H1 (cell line): ENCODE measurements at regions of chr5 and their contacts with region 1.

Region 1: DNA sequence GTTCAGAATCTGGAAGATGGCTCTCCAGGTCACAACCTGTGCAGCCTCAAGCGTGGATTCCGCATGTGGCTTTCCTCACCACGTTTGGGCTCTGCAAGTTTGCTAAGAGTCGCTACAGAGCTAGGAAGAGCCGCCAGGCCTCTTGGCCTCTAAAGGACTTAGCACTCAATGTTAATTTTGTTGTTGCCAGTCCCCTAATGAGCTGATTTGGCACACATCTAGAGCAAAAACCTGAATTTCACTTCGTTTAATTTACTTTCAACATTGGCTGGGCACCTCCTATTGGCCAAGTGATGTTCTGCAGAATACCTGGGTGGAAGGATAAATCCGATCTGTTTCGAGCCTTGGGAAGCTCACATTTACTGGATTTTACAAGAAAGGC is 65.8 kb upstream of the UNC5A start:
- DNase-seq: no peak
- H3K4me3 ChIP-seq: peak overlapping the region in 3 of 4 experiments; percentile 3 to 61 (median 3); a peak in 2 of 8 replicates
- H3K27ac ChIP-seq: no peak overlapping the region
- H3K4me1 ChIP-seq: peaks cover 7 to 33% (median 28%) of the 10 kb centered on the region in 4 experiments
- H3K27me3 ChIP-seq: peaks cover 0 to 23% (median 8%) of the 10 kb centered on the region in 4 experiments; a peak in 6 of 7 replicates
- CTCF ChIP-seq: peak in 2 of 3 experiments; percentile 49 to 70; a peak in 3 of 4 replicates
- EP300 ChIP-seq: no peak
- POLR2A ChIP-seq: no peak
- RAD21 ChIP-seq: peak; percentile 46 to 57

Region 2: DNA sequence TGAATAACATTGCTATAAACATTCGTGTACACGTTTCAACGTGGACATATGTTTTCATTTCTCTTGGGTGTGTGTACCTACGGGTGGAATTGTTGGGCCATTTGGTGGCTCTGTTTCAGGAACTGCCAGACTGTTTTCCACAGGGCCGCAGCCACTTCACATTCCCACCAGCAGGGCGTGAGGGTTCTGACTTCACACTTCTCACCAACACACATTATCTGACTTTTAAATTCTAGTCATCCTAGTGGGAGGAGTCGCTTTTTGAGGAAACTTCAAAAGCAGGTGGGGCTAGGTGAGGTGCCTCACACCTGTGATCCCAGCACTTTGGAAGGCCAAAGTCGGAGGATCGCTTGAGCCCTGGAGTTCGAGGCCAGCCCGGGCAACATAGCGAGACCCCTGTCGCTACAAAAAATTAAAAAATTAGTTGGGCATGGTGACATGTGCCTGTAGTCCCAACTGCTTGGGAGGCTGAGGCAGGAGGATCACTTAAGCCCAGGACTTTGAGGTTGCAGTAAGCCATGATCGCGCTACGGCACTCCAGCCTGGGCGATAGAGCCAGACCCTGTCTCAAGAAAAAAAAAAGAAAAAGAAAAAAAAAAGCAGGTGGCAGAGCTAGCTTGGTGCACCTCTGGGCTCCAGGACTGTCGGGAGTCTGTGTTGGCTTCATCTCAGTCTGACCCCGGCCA is 68.8 kb before region 1 on chr5:
- CTCF ChIA-PET with region 1: interaction called, 14 read pairs
- POLR2A ChIA-PET with region 1: interaction called, 3 read pairs
- DNase-seq: peak in 1 of 2 experiments; percentile 74
- H3K4me3 ChIP-seq: no peak overlapping the region
- H3K27ac ChIP-seq: no peak overlapping the region
- H3K4me1 ChIP-seq: peaks cover 0 to 17% (median 11%) of the 10 kb centered on the region in 4 experiments; a peak in 6 of 7 replicates
- H3K27me3 ChIP-seq: peaks cover 0 to 18% (median 17%) of the 10 kb centered on the region in 4 experiments; a peak in 6 of 7 replicates
- CTCF ChIP-seq: peak in 2 of 3 experiments; percentile 65 to 86; a peak in 3 of 4 replicates
- EP300 ChIP-seq: no peak
- POLR2A ChIP-seq: no peak
- RAD21 ChIP-seq: peak; percentile 39 to 56

Region 3: DNA sequence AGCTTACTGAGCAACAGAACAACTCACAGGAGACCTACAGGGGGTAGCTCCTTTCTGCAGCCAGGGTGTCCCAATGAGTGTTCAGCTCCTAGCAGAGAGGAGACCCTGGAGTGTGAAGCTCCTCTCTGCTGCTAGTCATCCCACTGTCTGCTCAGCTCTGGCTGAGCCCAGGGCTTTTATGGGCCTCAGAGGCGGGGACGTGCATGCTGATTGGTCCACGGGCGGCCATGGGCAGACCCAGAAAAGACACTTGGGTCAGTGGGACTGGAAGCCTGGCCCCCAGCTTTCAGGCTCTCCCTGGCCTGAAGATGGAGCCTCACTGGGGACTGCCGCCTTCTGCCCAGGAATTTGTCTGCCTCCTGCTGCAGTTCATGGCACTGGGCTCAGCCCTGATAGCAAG is 56.7 kb before region 1 on chr5:
- CTCF ChIA-PET with region 1: interaction called, 22 read pairs
- POLR2A ChIA-PET with region 1: interaction called, 3 read pairs
- DNase-seq: peak in 1 of 2 experiments; percentile 21
- H3K4me3 ChIP-seq: no peak overlapping the region
- H3K27ac ChIP-seq: no peak overlapping the region
- H3K4me1 ChIP-seq: peaks cover 7 to 17% (median 11%) of the 10 kb centered on the region in 4 experiments; a peak in 6 of 7 replicates
- H3K27me3 ChIP-seq: no peaks in the 10 kb centered on the region
- CTCF ChIP-seq: no peak
- EP300 ChIP-seq: no peak
- POLR2A ChIP-seq: peak in 1 of 2 experiments; percentile 70; a peak in 2 of 3 replicates
- RAD21 ChIP-seq: no peak

Region 4: DNA sequence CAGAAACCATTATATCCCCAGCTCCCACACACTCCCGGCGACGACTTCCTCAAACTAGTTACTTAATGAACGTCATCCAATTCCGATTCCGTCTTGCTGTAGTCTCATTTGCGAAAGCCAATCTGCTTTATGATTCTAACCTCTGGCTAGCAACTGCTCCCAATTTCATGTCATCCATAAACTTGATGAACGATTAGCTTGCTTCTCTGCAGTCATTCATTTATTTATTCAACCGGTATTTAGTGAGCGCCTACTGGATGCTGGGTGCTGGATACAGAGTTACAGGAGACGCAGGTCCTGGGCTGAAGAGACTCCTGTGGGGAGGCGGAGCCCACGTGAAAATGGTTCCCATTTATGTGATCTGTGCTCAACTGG is 51.1 kb before region 1 on chr5:
- CTCF ChIA-PET with region 1: interaction called, 54 read pairs
- POLR2A ChIA-PET with region 1: no interaction called
- DNase-seq: no peak
- H3K4me3 ChIP-seq: no peak overlapping the region
- H3K27ac ChIP-seq: no peak overlapping the region
- H3K4me1 ChIP-seq: peaks cover 16 to 37% (median 28%) of the 10 kb centered on the region in 4 experiments
- H3K27me3 ChIP-seq: peaks cover 0 to 3% (median under 1%) of the 10 kb centered on the region in 4 experiments; a peak in 4 of 7 replicates
- CTCF ChIP-seq: no peak
- EP300 ChIP-seq: no peak
- POLR2A ChIP-seq: no peak
- RAD21 ChIP-seq: no peak

Region 5: DNA sequence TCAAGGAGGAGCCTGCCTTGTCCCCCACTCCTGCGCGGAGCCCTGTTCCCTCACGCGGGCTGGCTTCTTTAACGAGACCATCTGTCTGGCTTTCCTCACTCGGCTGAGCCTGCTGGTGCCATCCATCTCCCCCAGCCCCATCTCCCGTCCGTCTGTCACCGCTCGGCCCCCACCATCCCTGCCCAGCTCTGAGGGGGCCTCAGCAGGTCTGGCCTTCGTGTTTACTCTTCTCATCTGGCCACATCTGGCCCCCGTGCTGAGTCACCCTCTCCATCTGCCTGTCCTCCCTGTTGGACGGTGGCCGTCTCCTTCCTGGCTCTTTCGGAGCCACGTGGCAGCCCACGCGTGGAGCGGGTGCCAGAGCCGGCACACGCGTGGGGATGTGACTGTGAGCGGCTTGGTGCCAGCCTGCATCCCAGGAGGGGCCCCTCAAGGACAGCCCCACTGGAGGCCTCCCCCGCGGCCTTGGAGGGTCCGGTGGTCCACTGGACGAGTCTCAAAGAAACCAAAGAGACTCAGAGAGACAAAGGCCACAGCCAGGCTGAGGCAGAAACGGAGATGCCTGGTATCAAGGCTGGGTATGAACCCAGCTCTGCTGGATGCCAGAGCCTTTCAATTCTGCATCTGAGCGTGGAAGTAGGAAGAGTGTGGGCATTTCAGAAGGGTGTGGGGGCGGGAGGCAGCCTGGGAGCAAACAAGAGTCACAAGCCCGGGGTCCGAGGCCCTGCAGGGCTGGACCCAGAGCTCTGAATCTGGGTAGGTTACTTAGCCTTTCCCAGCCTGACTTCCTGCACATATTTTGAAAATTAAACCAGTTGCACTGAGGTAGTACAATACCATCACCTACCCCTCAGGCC is 10.9 kb before region 1 on chr5:
- CTCF ChIA-PET with region 1: interaction called, 12 read pairs
- POLR2A ChIA-PET with region 1: interaction called, 10 read pairs
- DNase-seq: peak in 1 of 2 experiments; percentile 44
- H3K4me3 ChIP-seq: no peak overlapping the region
- H3K27ac ChIP-seq: no peak overlapping the region
- H3K4me1 ChIP-seq: peaks cover 0 to 11% (median 2%) of the 10 kb centered on the region in 4 experiments; a peak in 5 of 7 replicates
- H3K27me3 ChIP-seq: peaks cover 0 to 4% (median 2%) of the 10 kb centered on the region in 4 experiments; a peak in 3 of 7 replicates
- CTCF ChIP-seq: no peak
- EP300 ChIP-seq: no peak
- POLR2A ChIP-seq: no peak
- RAD21 ChIP-seq: no peak

Region 6: DNA sequence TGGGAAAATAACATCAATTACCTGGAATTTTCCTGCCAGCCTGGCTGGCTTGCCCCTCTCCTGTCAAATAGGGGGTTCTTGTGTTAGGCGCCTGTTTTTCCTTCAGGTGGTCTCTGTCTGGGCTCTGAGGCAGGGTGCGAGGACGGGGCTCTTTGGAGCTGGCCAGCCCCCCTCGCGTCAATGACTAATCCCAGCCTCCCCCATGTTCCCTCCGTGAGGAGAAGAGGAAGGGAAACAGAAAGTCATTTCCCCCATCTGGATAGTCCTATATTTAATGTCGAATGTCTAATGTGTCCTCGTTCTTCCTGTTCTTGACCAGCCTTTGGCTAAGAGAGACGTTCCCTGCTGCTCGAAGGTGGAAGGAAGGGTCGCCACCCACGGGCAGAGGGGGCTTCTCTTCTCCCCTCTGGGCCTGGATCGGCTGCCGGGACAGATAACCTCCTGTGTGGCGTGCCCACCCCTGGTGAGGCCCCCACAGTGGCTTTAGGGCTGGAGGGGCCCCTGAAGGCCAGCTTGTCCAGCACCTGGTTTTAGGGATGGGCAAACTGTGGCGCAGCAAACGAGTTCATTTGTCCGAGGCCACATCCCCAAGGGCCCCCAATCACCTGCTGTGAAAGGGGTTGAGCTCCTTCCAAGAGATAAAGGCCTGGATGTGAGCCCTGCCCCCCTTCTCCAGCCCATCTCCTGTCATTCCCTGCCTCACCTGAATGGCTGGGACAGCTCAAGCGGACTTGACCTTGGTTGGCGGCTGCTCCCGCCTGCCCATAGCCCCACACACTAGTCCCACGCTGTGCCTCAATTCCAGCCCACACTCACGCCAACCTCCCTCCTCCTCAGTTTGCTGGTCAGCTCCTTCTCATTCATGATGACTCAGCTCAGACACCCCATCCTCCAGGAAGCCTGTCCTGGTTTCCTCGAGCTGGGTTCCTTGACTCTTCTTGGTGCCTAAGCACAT is 29.9 kb after region 1 on chr5:
- CTCF ChIA-PET with region 1: interaction called, 23 read pairs
- POLR2A ChIA-PET with region 1: no interaction called
- DNase-seq: peak in 1 of 2 experiments; percentile 56
- H3K4me3 ChIP-seq: peak overlapping the region in 1 of 4 experiments; percentile 1; a peak in 1 of 8 replicates
- H3K27ac ChIP-seq: no peak overlapping the region
- H3K4me1 ChIP-seq: peaks cover 7 to 15% (median 11%) of the 10 kb centered on the region in 4 experiments
- H3K27me3 ChIP-seq: peaks cover 0 to 3% (median 0%) of the 10 kb centered on the region in 4 experiments; a peak in 1 of 7 replicates
- CTCF ChIP-seq: no peak
- EP300 ChIP-seq: no peak
- POLR2A ChIP-seq: no peak
- RAD21 ChIP-seq: no peak